Activated CD4-positive, alpha-beta memory T cell treated with anti-CD3 and anti-CD28 coated beads for 36 hours (primary cell): ENCODE measurements at regions of chr17 and their contacts with region 1.

Region 1: GRCh38 chr17:68512247-68512982 is at the start of gene PRKAR1A:
- DNase-seq: peak; percentile 95
- H3K4me3 Mint-ChIP-seq: peak within 1 kb of the TSS; percentile 98
- H3K27ac Mint-ChIP-seq: peak within 1 kb of the TSS; percentile 98
- H3K4me1 Mint-ChIP-seq: peaks cover 46% of the 10 kb centered on the region
- H3K27me3 Mint-ChIP-seq: no peaks in the 10 kb centered on the region
- total RNA-seq, gene PRKAR1A: 221 to 229 TPM

Region 2: DNA sequence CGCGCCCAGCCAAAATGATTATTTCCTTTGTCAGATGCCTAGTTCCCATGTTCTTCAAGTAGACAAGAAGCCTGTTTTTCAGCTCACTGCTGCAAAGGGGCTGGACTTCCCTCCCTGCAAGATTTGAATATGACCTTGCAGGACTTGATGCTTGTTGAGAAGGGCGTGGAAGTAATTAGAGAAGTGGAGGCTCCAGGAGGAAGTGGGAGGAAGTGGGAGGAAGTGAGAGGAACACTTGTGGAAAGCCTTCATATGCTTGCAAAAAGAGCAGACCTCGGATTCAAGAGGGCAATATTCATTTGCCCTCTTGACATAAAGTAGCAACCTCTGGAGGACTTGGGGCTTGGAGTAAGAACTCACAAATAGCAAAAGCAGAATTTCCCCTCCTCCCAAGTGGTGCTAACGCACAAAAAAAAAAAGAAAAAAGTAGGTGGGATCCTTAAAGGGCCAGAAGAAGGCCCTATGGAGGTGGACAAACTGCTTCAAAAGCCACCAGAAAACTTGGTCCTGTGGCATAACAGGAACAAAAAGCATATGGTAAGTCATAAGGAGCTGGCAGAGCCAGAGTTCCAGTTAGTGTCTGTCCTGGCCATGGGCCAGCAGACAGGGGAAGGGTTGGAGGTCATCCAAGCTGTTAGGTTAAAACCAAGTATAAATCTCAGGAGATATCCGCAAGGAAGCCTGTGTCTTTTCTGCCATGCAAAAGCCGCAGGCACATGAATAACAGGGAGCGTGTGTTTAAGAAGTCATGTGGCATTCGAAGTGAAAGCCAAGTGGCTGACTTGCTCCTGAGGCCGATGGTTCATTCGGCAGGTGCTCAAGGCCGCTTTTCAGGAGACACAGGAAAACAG is 20.8 kb before region 1 on chr17:
- CTCF ChIA-PET with region 1: no interaction called
- POLR2A ChIA-PET with region 1: interaction called, 3 read pairs
- intact Hi-C with region 1: loop called (anchors 2 kb)
- DNase-seq: no peak
- H3K4me3 Mint-ChIP-seq: no peak overlapping the region
- H3K27ac Mint-ChIP-seq: no peak overlapping the region
- H3K4me1 Mint-ChIP-seq: peaks cover 12% of the 10 kb centered on the region
- H3K27me3 Mint-ChIP-seq: no peaks in the 10 kb centered on the region

Region 3: GRCh38 chr17:69327060-69327831 is 814.8 kb after region 1 on chr17 and contains the start of gene ABCA5:
- CTCF ChIA-PET with region 1: no interaction called
- POLR2A ChIA-PET with region 1: no interaction called
- intact Hi-C with region 1: loop called (anchors 5 kb)
- DNase-seq: peak; percentile 93
- H3K4me3 Mint-ChIP-seq: peak within 1 kb of the TSS; percentile 97
- H3K27ac Mint-ChIP-seq: peak within 1 kb of the TSS; percentile 87
- H3K4me1 Mint-ChIP-seq: peaks cover 28% of the 10 kb centered on the region
- H3K27me3 Mint-ChIP-seq: peaks cover 2% of the 10 kb centered on the region
- total RNA-seq, gene ABCA5: 12.8 to 13.0 TPM